ENCODE measurements at regions of chr3 and their contacts with region 1.

Region 1: GRCh38 chr3:133384331-133385027 is 15.4 kb upstream of the BFSP2 start:
- DNase-seq: no peak

Region 2: GRCh38 chr3:132730891-132731580 is 653.4 kb before region 1 on chr3:
- intact Hi-C with region 1: loop called (anchors 10 kb)
- DNase-seq: no peak

Region 3: DNA sequence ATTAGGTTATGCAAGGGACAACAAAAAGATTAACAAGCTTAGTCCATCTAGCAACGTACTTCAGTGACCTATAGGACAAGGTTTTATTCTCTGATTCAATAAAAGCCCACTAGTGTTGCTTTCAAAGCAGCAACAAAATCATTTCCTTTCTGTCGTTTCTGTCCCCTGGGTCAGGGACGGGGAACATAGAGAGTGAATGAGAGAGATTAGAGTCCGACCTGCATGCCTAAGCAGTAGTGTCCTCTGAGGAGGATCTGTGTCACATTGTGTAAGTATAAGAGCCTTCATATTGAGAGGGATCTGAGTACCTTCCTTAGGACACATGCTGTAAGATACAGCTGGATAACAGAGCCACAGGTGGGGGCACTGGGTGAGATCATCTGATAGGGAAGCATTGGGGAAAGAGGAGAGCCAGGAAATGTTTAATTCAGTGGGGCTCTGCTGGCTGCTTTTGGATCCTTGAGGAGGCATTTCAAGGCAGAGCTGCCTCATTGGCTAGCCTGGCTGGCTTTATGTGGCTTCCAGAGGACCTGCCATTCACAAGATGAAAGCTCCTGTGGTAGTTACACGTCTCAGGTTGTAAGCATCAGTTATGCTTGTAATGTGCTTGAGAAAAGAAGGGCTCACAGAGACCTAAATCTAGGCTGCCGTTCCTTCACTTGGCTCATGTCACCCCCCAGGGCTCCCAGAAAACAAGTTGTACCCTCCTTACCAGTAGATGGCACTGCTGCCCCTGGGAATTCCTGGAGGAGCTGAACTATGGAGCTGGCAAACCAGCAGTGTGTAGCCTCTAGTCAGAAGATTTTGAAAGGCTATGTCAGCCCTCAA is 343.6 kb before region 1 on chr3:
- intact Hi-C with region 1: loop called (anchors 5 kb)
- DNase-seq: peak; percentile 82